Naive thymus-derived CD4-positive, alpha-beta T cell (primary cell): ENCODE measurements at regions of chr12 and their contacts with region 1.

Region 1: GRCh38 chr12:89862511-89863179 is 154.0 kb upstream of the ATP2B1 start:
- DNase-seq: peak in 7 of 9 donors; percentile 46 to 66 (median 57)
- ATAC-seq: peak; percentile 49
- H3K4me3 ChIP-seq: peak overlapping the region; percentile 44
- H3K4me3 Mint-ChIP-seq: peak overlapping the region; percentile 78 to 86 (median 82)
- H3K27ac ChIP-seq: peak overlapping the region; percentile 87
- H3K27ac Mint-ChIP-seq: peak overlapping the region; percentile 96 to 99 (median 98)
- H3K4me1 ChIP-seq: peaks cover 23 to 30% of the 10 kb centered on the region in 2 donors
- H3K4me1 Mint-ChIP-seq: peaks cover 40 to 72% (median 53%) of the 10 kb centered on the region in 7 donors
- H3K27me3 ChIP-seq: no peaks in the 10 kb centered on the region
- H3K27me3 Mint-ChIP-seq: no peaks in the 10 kb centered on the region

Region 2: DNA sequence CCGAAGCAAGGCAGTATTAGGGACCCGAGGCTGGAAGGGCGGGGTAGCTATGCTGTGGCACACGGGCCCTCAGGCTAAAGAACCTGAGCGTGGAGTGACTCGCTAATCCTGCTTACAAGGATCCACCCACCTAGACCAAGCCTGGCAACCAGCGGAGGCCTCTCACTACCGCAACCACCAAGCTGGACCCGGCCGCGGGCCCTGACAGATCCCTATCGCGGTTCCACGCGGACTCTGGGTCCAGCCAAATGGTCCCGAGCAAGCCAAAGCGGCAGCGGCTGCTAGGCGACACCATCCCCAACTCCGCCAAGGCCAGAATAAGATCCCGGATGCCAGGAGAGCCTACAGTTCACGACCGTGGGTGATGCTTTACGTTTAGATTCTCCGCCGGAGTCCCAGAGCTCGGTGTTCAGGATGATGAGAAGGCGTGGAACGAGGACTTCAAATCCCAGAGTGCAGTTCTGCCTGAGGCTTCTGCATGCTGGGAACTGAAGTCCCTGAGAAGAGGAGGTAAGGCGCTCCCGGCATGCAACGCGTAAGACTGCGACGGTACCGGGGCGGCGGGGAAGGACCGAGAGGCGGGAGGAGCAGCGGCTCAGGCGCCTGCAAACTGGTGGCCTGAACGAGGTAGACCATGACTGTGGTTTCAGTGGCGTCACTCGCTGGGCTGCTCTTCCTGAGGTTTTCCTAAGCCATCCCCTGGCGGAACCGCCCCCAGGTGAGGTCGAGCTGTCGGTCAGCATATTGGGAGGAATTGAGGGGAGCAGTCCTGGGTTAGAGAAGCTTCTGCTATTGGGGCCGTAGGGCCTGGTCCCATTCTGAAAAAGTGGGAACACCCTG is 1720.7 kb before region 1 on chr12 and contains the starts of genes CEP290 and TMTC3:
- CTCF ChIA-PET with region 1: no interaction called
- POLR2A ChIA-PET with region 1: no interaction called
- intact Hi-C with region 1: loop called in 1 of 2 experiments (anchors 5 kb)
- DNase-seq: peak; percentile 69 to 98 (median 94)
- ATAC-seq: peak; percentile 97
- H3K4me3 ChIP-seq: peak within 1 kb of the TSS; percentile 82
- H3K4me3 Mint-ChIP-seq: peak within 1 kb of the TSS; percentile 88 to 100 (median 96)
- H3K27ac ChIP-seq: peak within 1 kb of the TSS; percentile 84
- H3K27ac Mint-ChIP-seq: peak within 1 kb of the TSS; percentile 66 to 99 (median 94)
- H3K4me1 ChIP-seq: peaks cover 12 to 14% of the 10 kb centered on the region in 2 donors
- H3K4me1 Mint-ChIP-seq: peaks cover 26 to 68% (median 45%) of the 10 kb centered on the region in 7 donors
- H3K27me3 ChIP-seq: no peaks in the 10 kb centered on the region
- H3K27me3 Mint-ChIP-seq: no peaks in the 10 kb centered on the region
- total RNA-seq, gene CEP290: 14.7 to 29.5 (median 19.5) TPM
- total RNA-seq, gene TMTC3: 6.4 to 11.1 (median 7.5) TPM

Region 3: GRCh38 chr12:89756585-89757321 is 105.9 kb before region 1 on chr12:
- CTCF ChIA-PET with region 1: no interaction called
- POLR2A ChIA-PET with region 1: no interaction called
- intact Hi-C with region 1: loop called (anchors 1 to 2 kb)
- DNase-seq: peak in 3 of 9 donors; percentile 11 to 31 (median 12)
- ATAC-seq: peak; percentile 86
- H3K4me3 ChIP-seq: no peak overlapping the region
- H3K4me3 Mint-ChIP-seq: peak overlapping the region in 1 of 10 donors; percentile 1
- H3K27ac ChIP-seq: no peak overlapping the region
- H3K27ac Mint-ChIP-seq: peak overlapping the region in 4 of 9 donors; percentile 6 to 75 (median 42)
- H3K4me1 ChIP-seq: peaks cover 4 to 28% of the 10 kb centered on the region in 2 donors
- H3K4me1 Mint-ChIP-seq: peaks cover 14 to 28% (median 25%) of the 10 kb centered on the region in 7 donors
- H3K27me3 ChIP-seq: no peaks in the 10 kb centered on the region
- H3K27me3 Mint-ChIP-seq: no peaks in the 10 kb centered on the region

Region 4: DNA sequence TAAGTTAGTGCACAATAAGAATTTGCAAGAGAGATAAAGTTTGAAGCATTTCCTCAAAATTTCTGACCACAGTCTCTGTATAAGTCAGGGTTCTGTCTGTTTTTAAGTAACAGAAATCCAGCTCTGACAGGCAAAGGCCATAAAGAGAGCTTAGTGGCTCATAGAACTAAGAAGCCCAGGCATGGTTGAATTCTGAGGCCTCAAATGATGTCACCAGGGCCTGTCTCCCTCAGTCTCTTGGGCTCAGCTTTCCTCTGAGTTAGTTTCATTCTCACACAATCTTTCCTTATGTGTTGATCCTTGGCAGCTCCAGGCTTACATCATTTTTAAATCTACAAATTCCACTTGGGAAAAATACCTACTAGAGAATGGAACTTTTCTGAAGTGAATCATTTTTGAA is 19.4 kb after region 1 on chr12:
- CTCF ChIA-PET with region 1: interaction called, 4 read pairs
- POLR2A ChIA-PET with region 1: interaction called, 15 read pairs
- intact Hi-C with region 1: loop called (anchors 1 kb)
- DNase-seq: no peak
- ATAC-seq: peak; percentile 31
- H3K4me3 ChIP-seq: no peak overlapping the region
- H3K4me3 Mint-ChIP-seq: peak overlapping the region in 7 of 10 donors; percentile 30 to 83 (median 75)
- H3K27ac ChIP-seq: peak overlapping the region; percentile 28
- H3K27ac Mint-ChIP-seq: peak overlapping the region; percentile 82 to 95 (median 91)
- H3K4me1 ChIP-seq: peaks cover 31 to 36% of the 10 kb centered on the region in 2 donors
- H3K4me1 Mint-ChIP-seq: peaks cover 23 to 62% (median 57%) of the 10 kb centered on the region in 7 donors
- H3K27me3 ChIP-seq: no peaks in the 10 kb centered on the region
- H3K27me3 Mint-ChIP-seq: peaks cover 0 to 3% (median 0%) of the 10 kb centered on the region in 5 donors

Region 5: GRCh38 chr12:90091021-90091651 is 228.5 kb after region 1 on chr12:
- CTCF ChIA-PET with region 1: no interaction called
- POLR2A ChIA-PET with region 1: no interaction called
- intact Hi-C with region 1: loop called in 1 of 2 experiments (anchors 10 kb)
- DNase-seq: peak in 1 of 9 donors; percentile 36
- ATAC-seq: peak; percentile 76
- H3K4me3 ChIP-seq: no peak overlapping the region
- H3K4me3 Mint-ChIP-seq: no peak overlapping the region
- H3K27ac ChIP-seq: no peak overlapping the region
- H3K27ac Mint-ChIP-seq: no peak overlapping the region
- H3K4me1 ChIP-seq: no peaks in the 10 kb centered on the region
- H3K4me1 Mint-ChIP-seq: peaks cover 0 to 16% (median 5%) of the 10 kb centered on the region in 7 donors
- H3K27me3 ChIP-seq: no peaks in the 10 kb centered on the region
- H3K27me3 Mint-ChIP-seq: no peaks in the 10 kb centered on the region